Mammary epithelial cell (primary cell): ENCODE measurements at regions of chr3 and their contacts with region 1.

Region 1: GRCh38 chr3:107064445-107065060 is 312.7 kb upstream of the CCDC54 start:
- DNase-seq: peak; percentile 62
- H3K4me3 ChIP-seq: no peak overlapping the region
- H3K27ac ChIP-seq: no peak overlapping the region
- H3K4me1 ChIP-seq: peaks cover 32% of the 10 kb centered on the region
- H3K27me3 ChIP-seq: no peaks in the 10 kb centered on the region
- CTCF ChIP-seq: peak; percentile 81 to 84

Region 2: GRCh38 chr3:106518516-106518915 is 546.0 kb before region 1 on chr3:
- CTCF ChIA-PET with region 1: no interaction called
- dilution Hi-C with region 1: no loop called
- in situ Hi-C with region 1: no loop called
- intact Hi-C with region 1: no loop called
- DNase-seq: peak; percentile 25
- H3K4me3 ChIP-seq: no peak overlapping the region
- H3K27ac ChIP-seq: no peak overlapping the region
- H3K4me1 ChIP-seq: no peaks in the 10 kb centered on the region
- H3K27me3 ChIP-seq: no peaks in the 10 kb centered on the region
- CTCF ChIP-seq: no peak

Region 3: GRCh38 chr3:106609666-106610301 is 454.8 kb before region 1 on chr3:
- CTCF ChIA-PET with region 1: interaction called, 3 read pairs
- dilution Hi-C with region 1: no loop called
- in situ Hi-C with region 1: loop called in 1 of 2 experiments (anchors 25 kb)
- intact Hi-C with region 1: loop called (anchors 1 kb)
- DNase-seq: peak; percentile 62
- H3K4me3 ChIP-seq: no peak overlapping the region
- H3K27ac ChIP-seq: no peak overlapping the region
- H3K4me1 ChIP-seq: peaks cover 10% of the 10 kb centered on the region
- H3K27me3 ChIP-seq: no peaks in the 10 kb centered on the region
- CTCF ChIP-seq: peak; percentile 90 to 92

Region 4: GRCh38 chr3:106635271-106635670 is 429.3 kb before region 1 on chr3:
- CTCF ChIA-PET with region 1: no interaction called
- dilution Hi-C with region 1: no loop called
- in situ Hi-C with region 1: loop called in 1 of 2 experiments (anchors 25 kb)
- intact Hi-C with region 1: no loop called
- DNase-seq: peak; percentile 90
- H3K4me3 ChIP-seq: no peak overlapping the region
- H3K27ac ChIP-seq: peak overlapping the region; percentile 69
- H3K4me1 ChIP-seq: peaks cover 13% of the 10 kb centered on the region
- H3K27me3 ChIP-seq: no peaks in the 10 kb centered on the region
- CTCF ChIP-seq: no peak

Region 5: DNA sequence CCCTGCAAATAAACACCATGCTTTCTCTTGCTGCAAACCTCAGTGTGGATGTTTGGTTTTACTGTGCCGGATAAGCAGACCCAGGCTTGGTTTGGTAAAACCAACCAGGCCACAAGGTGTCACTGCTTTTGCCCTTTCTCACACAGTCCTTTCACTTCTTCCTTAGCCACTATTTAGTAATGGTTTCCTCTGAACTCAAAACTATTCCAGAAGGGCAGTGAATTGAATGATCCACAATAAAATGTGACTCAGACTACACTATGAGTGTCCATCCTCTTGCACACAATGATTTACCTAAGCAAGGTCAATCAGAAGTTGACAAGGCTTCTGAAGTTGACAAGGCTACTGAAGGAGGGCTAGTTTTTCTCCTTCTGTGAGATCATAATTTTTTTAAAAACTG is 239.7 kb before region 1 on chr3:
- CTCF ChIA-PET with region 1: no interaction called
- dilution Hi-C with region 1: no loop called
- in situ Hi-C with region 1: no loop called
- intact Hi-C with region 1: loop called (anchors 1 kb)
- DNase-seq: peak; percentile 49
- H3K4me3 ChIP-seq: no peak overlapping the region
- H3K27ac ChIP-seq: no peak overlapping the region
- H3K4me1 ChIP-seq: peaks cover 6% of the 10 kb centered on the region
- H3K27me3 ChIP-seq: no peaks in the 10 kb centered on the region
- CTCF ChIP-seq: peak in 1 of 2 donors; percentile 42